ENCODE measurements at regions of chr2 and their contacts with region 1.

Region 1: DNA sequence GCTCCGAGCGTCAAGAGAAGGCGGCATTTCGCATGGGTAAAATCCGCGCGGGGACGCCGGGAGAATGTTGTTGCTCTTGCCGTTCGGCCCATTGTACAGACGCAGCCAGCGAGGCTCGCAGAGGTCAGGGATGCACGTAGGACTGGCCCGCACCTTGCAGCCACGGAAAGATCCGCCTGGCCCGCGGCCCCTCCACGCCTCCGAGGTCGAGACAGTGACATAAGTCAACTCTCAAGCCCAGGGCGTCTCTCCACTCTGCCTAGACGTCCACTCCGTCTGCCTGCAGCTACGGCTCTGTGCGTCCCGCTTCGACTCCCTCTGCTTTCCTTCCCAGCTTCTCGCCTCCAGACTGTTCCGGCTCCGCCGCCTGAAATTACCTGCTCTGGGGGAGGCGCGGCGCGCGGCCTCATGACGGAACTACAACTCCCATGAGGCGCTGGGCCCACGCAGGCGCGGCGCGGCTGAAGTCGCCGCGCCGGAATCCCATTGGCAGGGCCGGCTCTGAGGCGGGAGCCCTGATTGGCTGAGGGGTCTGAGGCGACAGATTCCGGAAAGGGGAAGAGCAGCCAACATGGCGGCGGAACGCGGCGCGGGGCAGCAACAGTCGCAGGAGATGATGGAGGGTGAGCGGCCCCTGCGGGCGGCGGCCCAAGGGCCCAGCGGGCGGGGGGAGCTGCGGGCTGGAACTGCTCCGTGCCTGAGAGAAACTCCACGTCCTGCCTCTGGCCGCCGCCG is at the start of gene PPP1R7:
- DNase-seq: peak; percentile 89 to 92 (median 91)
- H3K4me3 ChIP-seq: peak within 1 kb of the TSS; percentile 56 to 87 (median 83)
- H3K4me3 Mint-ChIP-seq: peak within 1 kb of the TSS; percentile 98 to 99
- H3K27ac ChIP-seq: peak within 1 kb of the TSS in 1 of 2 donors; percentile 74
- H3K27ac Mint-ChIP-seq: peak within 1 kb of the TSS; percentile 73 to 95 (median 85)
- H3K4me1 ChIP-seq: peaks cover 12 to 27% of the 10 kb centered on the region in 2 donors
- H3K4me1 Mint-ChIP-seq: peaks cover 24% of the 10 kb centered on the region
- H3K27me3 ChIP-seq: no peaks in the 10 kb centered on the region
- H3K27me3 Mint-ChIP-seq: peaks cover 0 to 8% (median 2%) of the 10 kb centered on the region in 3 donors
- CTCF ChIP-seq: no peak
- polyA plus RNA-seq, gene PPP1R7: 54.9 to 102 (median 84.4) TPM

Region 2: DNA sequence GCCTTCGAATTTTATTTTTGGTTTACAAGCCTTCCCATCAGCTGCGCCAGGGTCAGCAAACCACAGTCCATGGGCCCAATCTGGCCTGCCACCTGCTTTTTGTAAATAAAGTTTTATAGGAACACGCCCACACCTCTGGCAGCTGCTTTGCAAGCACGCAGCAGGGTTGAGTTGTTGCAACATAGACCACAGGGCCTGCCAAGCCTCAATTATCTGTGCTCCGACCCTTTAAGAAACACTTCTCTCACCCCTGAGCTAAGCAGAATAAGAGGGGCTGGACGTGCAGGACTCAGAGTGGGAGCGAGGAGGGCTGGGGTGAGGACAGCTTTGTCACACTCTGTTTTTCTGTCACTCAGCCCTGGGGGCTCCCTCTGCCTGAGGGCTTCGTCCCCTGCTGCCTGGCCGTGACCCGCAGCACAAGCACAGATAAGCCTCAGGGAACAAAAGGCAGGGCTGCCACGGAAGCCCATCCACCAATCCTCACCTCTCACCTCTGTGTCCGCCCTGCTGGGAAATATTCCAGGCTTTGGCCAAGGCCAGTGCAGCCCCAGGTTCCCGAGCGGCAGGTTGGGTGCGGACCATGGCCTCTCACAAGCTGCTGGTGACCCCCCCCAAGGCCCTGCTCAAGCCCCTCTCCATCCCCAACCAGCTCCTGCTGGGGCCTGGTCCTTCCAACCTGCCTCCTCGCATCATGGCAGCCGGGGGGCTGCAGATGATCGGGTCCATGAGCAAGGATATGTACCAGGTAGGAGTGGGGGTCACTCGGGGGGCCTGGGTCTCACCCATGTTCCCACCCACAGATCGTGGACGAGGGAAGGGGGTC is 281.6 kb before region 1 on chr2 and contains the start of gene AGXT:
- intact Hi-C with region 1: no loop called
- DNase-seq: no peak
- H3K4me3 ChIP-seq: no peak within 1 kb of the TSS
- H3K4me3 Mint-ChIP-seq: no peak within 1 kb of the TSS
- H3K27ac ChIP-seq: no peak within 1 kb of the TSS
- H3K27ac Mint-ChIP-seq: peak within 1 kb of the TSS in 1 of 7 donors; percentile 18
- H3K4me1 ChIP-seq: no peaks in the 10 kb centered on the region
- H3K4me1 Mint-ChIP-seq: peaks cover 5% of the 10 kb centered on the region
- H3K27me3 ChIP-seq: no peaks in the 10 kb centered on the region
- H3K27me3 Mint-ChIP-seq: peaks cover 3 to 6% (median 5%) of the 10 kb centered on the region in 3 donors
- CTCF ChIP-seq: no peak
- polyA plus RNA-seq, gene AGXT: not detected

Region 3: GRCh38 chr2:240998120-240998994 is 151.7 kb before region 1 on chr2 and contains the start of gene SNED1:
- intact Hi-C with region 1: loop called in 1 of 2 experiments (anchors 10 kb)
- DNase-seq: peak; percentile 70 to 77 (median 70)
- H3K4me3 ChIP-seq: peak within 1 kb of the TSS; percentile 47 to 79 (median 64)
- H3K4me3 Mint-ChIP-seq: peak within 1 kb of the TSS; percentile 70 to 91
- H3K27ac ChIP-seq: peak within 1 kb of the TSS in 1 of 2 donors; percentile 62
- H3K27ac Mint-ChIP-seq: peak within 1 kb of the TSS in 2 of 7 donors; percentile 45 to 66
- H3K4me1 ChIP-seq: peaks cover 10 to 20% of the 10 kb centered on the region in 2 donors
- H3K4me1 Mint-ChIP-seq: peaks cover 9% of the 10 kb centered on the region
- H3K27me3 ChIP-seq: peaks cover 4 to 47% of the 10 kb centered on the region in 2 donors
- H3K27me3 Mint-ChIP-seq: peaks cover 48 to 79% (median 51%) of the 10 kb centered on the region in 3 donors
- CTCF ChIP-seq: no peak
- polyA plus RNA-seq, gene SNED1: 0.02 to 3.4 (median 0.12) TPM

Region 4: DNA sequence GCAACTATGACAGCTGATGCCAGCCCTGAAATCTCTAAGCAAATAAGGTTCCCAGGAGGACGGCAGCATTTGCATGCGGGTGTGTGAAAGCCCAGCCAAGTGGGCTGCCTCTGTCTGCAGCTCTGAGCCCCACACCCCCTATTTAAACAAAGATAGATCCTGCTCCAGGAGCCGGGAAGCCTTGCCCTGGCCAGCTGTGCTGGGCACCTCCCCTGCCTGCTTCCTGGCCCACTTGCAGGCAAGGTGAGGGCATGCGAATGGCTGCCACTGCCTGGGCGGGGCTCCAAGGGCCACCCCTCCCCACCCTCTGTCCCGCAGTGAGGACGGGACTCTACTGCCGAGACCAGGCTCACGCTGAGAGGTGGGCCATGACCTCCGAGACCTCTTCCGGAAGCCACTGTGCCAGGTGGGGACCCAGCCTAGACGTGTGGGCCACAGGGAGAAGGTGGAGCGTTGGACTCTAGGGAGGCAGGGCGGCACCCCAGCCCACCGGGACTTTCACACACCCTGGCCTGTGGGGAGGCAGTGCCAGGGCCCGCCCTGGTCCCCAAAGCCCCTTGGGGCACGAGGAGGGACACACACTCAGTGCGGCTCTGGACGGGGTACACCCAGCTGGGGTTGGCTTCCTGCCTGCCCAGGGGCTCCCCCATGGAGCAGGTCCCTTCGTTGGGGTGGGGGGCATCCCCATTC is 38.4 kb after region 1 on chr2 and contains the start of gene ANO7:
- intact Hi-C with region 1: no loop called
- DNase-seq: no peak
- H3K4me3 ChIP-seq: no peak within 1 kb of the TSS
- H3K4me3 Mint-ChIP-seq: no peak within 1 kb of the TSS
- H3K27ac ChIP-seq: no peak within 1 kb of the TSS
- H3K27ac Mint-ChIP-seq: no peak within 1 kb of the TSS
- H3K4me1 ChIP-seq: no peaks in the 10 kb centered on the region
- H3K4me1 Mint-ChIP-seq: no peaks in the 10 kb centered on the region
- H3K27me3 ChIP-seq: no peaks in the 10 kb centered on the region
- H3K27me3 Mint-ChIP-seq: peaks cover 0 to 2% (median 1%) of the 10 kb centered on the region in 3 donors
- CTCF ChIP-seq: no peak
- polyA plus RNA-seq, gene ANO7: 0.03 TPM in 1 of 3 donors, not detected in the others

Region 5: DNA sequence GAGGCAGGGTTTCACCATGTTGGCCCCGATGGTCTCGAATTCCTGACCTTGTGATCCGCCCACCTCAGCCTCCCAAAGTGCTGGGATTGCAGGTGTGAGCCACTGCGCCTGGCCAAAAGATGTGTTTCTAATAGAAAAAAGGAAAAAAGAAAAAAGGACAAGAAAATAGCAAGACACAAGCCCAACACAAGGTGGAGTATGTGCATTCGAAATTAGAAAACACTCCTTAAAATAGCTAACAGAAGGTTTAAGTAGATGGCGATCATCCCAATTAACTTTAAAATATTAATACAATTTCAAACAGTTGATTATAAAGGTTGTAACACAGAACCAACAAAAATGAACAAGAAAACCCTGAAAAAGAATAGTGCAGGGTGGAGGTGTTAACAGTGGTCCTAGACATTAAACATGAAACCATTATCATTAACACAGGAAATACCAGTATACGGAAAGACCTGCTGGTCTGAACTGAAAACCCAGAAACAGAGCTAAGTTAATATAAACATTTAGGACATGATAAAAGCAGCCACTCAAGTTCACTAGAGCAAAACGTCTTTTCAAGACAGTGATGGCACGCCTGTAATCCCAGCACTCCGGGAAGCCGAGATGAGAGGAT is 107.4 kb after region 1 on chr2:
- intact Hi-C with region 1: no loop called
- DNase-seq: no peak
- H3K4me3 ChIP-seq: no peak overlapping the region
- H3K4me3 Mint-ChIP-seq: no peak overlapping the region
- H3K27ac ChIP-seq: no peak overlapping the region
- H3K27ac Mint-ChIP-seq: peak overlapping the region in 1 of 7 donors; percentile 74
- H3K4me1 ChIP-seq: no peaks in the 10 kb centered on the region
- H3K4me1 Mint-ChIP-seq: no peaks in the 10 kb centered on the region
- H3K27me3 ChIP-seq: no peaks in the 10 kb centered on the region
- H3K27me3 Mint-ChIP-seq: no peaks in the 10 kb centered on the region
- CTCF ChIP-seq: no peak

Region 6: DNA sequence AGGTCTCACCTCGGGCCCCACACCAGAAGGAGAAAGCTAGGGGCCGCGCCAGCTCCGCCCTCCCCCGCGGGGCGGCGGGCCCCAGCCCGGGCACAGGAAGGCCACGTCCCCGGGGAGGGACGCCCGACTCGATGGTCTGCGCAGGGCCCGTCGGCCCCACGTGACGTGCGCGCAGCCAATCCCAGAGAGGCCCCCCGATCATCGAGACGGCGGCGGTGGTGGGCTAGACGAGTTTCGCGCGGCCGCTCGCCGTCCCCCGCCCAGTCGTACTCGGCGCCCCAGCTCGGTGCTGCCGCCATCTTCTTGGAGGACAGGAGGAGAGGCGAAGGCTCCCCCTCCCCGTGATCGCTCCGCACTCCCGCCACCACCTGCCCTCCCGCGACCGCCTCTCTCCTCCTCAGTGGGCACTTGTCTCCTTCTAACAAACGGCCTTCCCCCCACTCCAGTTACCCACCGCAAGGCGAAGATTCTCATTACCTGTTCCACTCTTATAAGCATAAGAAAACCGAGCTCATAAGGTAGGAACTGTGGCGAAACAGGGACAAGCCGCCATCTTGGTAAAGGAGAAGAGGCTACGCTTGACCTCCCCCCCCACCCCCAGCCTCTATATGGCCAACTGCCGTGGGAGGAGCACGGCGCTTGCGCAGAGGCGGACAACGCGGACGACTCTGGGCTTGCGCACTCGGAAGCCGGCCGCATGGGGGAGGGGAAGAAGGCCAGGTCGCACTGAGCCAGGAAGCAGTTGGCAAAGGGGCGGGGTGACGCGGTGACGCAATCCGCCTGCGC is 165.2 kb after region 1 on chr2 and contains the start of gene HDLBP:
- intact Hi-C with region 1: loop called in 1 of 2 experiments (anchors 5 kb)
- DNase-seq: peak; percentile 99 to 100 (median 100)
- H3K4me3 ChIP-seq: peak within 1 kb of the TSS; percentile 88 to 96 (median 88)
- H3K4me3 Mint-ChIP-seq: peak within 1 kb of the TSS; percentile 96 to 99
- H3K27ac ChIP-seq: peak within 1 kb of the TSS; percentile 98 to 99
- H3K27ac Mint-ChIP-seq: peak within 1 kb of the TSS; percentile 100
- H3K4me1 ChIP-seq: peaks cover 37 to 51% of the 10 kb centered on the region in 2 donors
- H3K4me1 Mint-ChIP-seq: peaks cover 72% of the 10 kb centered on the region
- H3K27me3 ChIP-seq: no peaks in the 10 kb centered on the region
- H3K27me3 Mint-ChIP-seq: peaks cover 0 to 5% (median 4%) of the 10 kb centered on the region in 3 donors
- CTCF ChIP-seq: no peak
- polyA plus RNA-seq, gene HDLBP: 50.4 to 73.1 (median 69.9) TPM

Region 7: DNA sequence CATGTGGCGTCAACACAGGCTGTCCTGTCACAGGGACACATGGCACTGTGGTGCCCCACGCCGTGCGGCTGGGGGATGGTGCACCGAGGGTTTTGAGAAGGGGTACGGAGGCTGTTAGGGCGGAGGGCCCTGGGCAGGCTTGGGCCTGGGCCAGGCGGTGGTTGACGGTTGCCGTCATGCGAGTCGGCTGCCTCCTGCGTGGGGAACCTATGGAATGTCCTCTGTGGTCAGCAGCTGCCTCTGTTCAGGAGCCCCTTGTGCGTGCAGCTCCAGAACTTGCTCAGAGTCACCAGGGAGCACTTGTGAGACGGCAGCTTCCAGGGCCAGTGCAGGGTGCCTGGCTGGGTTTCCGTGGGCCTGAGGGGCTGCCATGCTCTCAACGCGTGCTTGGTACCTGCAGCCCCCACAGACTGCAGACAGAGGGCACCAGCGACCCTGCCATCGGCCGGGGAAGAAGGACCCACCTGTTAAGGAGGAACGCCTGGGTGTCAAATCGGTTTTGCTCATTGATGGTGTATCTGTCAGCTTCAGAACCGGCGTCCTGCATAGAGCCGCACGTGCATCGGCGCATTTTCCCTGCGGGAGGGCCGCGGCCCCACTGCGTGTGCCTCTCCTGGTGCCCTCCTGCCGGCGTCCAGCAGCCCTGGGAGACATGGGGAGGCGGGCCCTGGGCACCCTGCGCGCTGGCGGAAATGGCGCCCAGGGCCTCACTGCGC is 574.3 kb after region 1 on chr2:
- intact Hi-C with region 1: no loop called
- DNase-seq: no peak
- H3K4me3 ChIP-seq: no peak overlapping the region
- H3K4me3 Mint-ChIP-seq: no peak overlapping the region
- H3K27ac ChIP-seq: no peak overlapping the region
- H3K27ac Mint-ChIP-seq: peak overlapping the region in 1 of 7 donors; percentile 38
- H3K4me1 ChIP-seq: no peaks in the 10 kb centered on the region
- H3K4me1 Mint-ChIP-seq: peaks cover 4% of the 10 kb centered on the region
- H3K27me3 ChIP-seq: no peaks in the 10 kb centered on the region
- H3K27me3 Mint-ChIP-seq: no peaks in the 10 kb centered on the region
- CTCF ChIP-seq: no peak

Measured in CD14-positive monocyte (primary cell).